ENCODE measurements at regions of chr2 and their contacts with region 1.

Region 1: GRCh38 chr2:170973492-170974303 is 44.6 kb downstream of the GORASP2 start:
- DNase-seq: peak; percentile 85 to 97 (median 94)
- ATAC-seq: peak; percentile 95 to 99 (median 96)
- H3K4me3 ChIP-seq: peak overlapping the region; percentile 57 to 82 (median 66)
- H3K27ac ChIP-seq: peak overlapping the region; percentile 15 to 77 (median 55)
- H3K4me1 ChIP-seq: peaks cover 0 to 7% (median 0%) of the 10 kb centered on the region in 3 donors
- H3K27me3 ChIP-seq: no peaks in the 10 kb centered on the region
- CTCF ChIP-seq: peak; percentile 94 to 96 (median 95)

Region 2: DNA sequence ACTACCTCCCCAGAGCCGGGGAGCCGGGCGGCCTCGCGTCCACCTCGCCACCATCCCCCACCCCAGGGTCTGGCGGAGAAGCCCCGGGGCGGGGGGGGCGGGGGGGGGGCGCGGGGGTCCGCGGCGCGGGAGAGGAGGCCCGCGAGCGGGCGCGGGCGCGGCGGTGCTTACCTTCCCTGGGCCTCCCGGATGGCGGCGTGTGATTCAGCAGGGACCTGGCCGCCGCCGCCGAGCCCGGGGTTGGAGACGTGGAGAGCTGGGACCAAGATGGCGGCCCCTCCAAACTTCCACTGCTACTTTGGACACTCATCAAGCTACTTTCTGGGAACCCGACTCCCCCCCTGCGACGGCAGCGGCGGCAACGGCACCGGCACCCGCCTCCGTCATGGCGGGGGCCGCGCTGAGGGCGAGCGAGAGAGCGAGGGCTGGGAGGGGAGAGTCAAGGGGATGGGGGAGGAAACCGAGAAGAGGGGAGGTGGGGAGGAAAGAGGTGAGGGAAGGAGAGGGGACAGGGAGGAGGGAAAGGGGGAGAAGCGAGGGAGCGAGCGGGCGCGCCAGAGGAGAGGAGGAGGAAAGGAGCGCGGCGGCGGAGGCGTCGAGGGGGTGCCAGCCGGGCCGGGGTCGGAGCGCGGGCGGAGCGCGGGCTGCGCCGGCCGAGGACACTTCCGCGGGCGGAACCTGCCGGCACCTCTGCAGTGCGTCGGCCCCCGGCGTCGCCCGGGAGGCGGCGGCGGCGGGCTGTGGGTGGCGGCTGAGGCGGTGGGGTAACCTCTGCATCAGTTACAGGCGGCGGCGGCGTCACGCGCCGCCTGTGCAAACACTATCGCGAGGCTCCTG is 186.6 kb after region 1 on chr2 and contains the start of gene TLK1:
- intact Hi-C with region 1: loop called in 1 of 3 experiments (anchors 5 kb)
- DNase-seq: peak; percentile 72 to 89 (median 80)
- ATAC-seq: peak; percentile 65 to 79 (median 72)
- H3K4me3 ChIP-seq: peak within 1 kb of the TSS; percentile 63 to 84 (median 68)
- H3K27ac ChIP-seq: peak within 1 kb of the TSS; percentile 82 to 96 (median 93)
- H3K4me1 ChIP-seq: peaks cover 0 to 25% (median 0%) of the 10 kb centered on the region in 3 donors
- H3K27me3 ChIP-seq: no peaks in the 10 kb centered on the region
- CTCF ChIP-seq: no peak
- total RNA-seq, gene TLK1: 25.8 to 43.4 (median 34.0) TPM